ENCODE measurements at regions of chr2 and their contacts with region 1.

Region 1: GRCh38 chr2:153519257-153519875 is 40.8 kb upstream of the RPRM start:
- DNase-seq: peak; percentile 55
- ATAC-seq: peak; percentile 63
- H3K4me3 ChIP-seq: no peak overlapping the region
- H3K27ac ChIP-seq: no peak overlapping the region
- H3K4me1 ChIP-seq: no peaks in the 10 kb centered on the region
- H3K27me3 ChIP-seq: no peaks in the 10 kb centered on the region
- CTCF ChIP-seq: peak; percentile 58 to 82 (median 67)
- POLR2A ChIP-seq: no peak
- RAD21 ChIP-seq: peak; percentile 79

Region 2: GRCh38 chr2:152861349-152861942 is 657.9 kb before region 1 on chr2:
- CTCF ChIA-PET with region 1: interaction called, 3 read pairs
- POLR2A ChIA-PET with region 1: no interaction called
- RAD21 ChIA-PET with region 1: no interaction called
- intact Hi-C with region 1: loop called (anchors 1 kb)
- DNase-seq: peak; percentile 46
- ATAC-seq: peak; percentile 93
- H3K4me3 ChIP-seq: no peak overlapping the region
- H3K27ac ChIP-seq: no peak overlapping the region
- H3K4me1 ChIP-seq: no peaks in the 10 kb centered on the region
- H3K27me3 ChIP-seq: no peaks in the 10 kb centered on the region
- CTCF ChIP-seq: peak; percentile 35 to 86 (median 82); a peak in 5 of 6 replicates
- POLR2A ChIP-seq: no peak
- RAD21 ChIP-seq: peak; percentile 48

Region 3: GRCh38 chr2:152925547-152926327 is 593.6 kb before region 1 on chr2:
- CTCF ChIA-PET with region 1: no interaction called
- POLR2A ChIA-PET with region 1: no interaction called
- RAD21 ChIA-PET with region 1: no interaction called
- intact Hi-C with region 1: loop called (anchors 1 kb)
- DNase-seq: peak; percentile 79
- ATAC-seq: peak; percentile 98
- H3K4me3 ChIP-seq: no peak overlapping the region
- H3K27ac ChIP-seq: no peak overlapping the region
- H3K4me1 ChIP-seq: peaks cover 0 to 12% of the 10 kb centered on the region in 2 experiments; a peak in 1 of 4 replicates
- H3K27me3 ChIP-seq: no peaks in the 10 kb centered on the region; the same call in 1 of the 2 replicates
- CTCF ChIP-seq: peak; percentile 71 to 95 (median 91)
- POLR2A ChIP-seq: no peak
- RAD21 ChIP-seq: peak; percentile 80

Region 4: DNA sequence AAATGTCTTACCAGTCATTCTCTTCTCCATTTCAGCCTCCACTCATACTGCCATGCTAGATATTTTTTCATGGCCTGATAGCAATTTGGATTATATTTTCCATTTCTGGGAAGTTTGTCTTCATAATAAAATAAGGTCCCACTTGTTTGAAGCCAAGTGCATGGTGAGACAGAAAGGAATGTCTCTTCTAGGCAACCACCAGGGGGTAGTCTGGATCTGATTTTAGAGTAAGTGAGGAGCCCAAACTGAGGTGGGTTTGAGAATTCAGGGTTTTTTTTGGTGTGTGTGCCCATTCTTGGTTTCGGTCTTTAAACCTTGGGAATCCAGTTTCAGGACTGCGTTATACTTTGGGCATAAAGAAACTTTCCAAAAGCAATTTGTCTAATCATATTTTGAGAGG is 356.3 kb before region 1 on chr2:
- CTCF ChIA-PET with region 1: no interaction called
- POLR2A ChIA-PET with region 1: no interaction called
- RAD21 ChIA-PET with region 1: no interaction called
- intact Hi-C with region 1: loop called (anchors 1 kb)
- DNase-seq: peak; percentile 53
- ATAC-seq: peak; percentile 64
- H3K4me3 ChIP-seq: no peak overlapping the region
- H3K27ac ChIP-seq: no peak overlapping the region
- H3K4me1 ChIP-seq: peaks cover 3 to 7% of the 10 kb centered on the region in 2 experiments; a peak in 1 of 4 replicates
- H3K27me3 ChIP-seq: peaks cover 5% of the 10 kb centered on the region; the same call in 1 of the 2 replicates
- CTCF ChIP-seq: peak; percentile 62 to 74 (median 70); a peak in 5 of 6 replicates
- POLR2A ChIP-seq: no peak
- RAD21 ChIP-seq: peak; percentile 81

Region 5: DNA sequence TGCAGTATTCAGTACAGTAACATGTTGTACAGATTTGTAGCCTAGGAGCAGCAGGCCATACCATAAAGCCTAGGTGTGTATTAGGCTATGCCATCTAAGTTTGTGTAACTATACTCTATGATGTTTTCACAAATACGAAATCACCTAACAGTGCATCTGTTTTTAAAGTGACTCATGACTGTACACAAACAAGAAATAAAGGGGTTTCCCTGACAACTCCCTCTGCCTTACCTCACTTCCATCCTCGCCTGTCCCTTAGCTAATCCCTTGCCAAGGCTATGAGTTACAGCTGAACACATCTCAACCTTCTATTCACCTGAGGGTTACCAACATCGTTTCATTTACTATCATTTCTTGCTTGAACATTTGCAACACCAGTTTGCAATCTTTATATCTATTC is 37.8 kb after region 1 on chr2:
- CTCF ChIA-PET with region 1: no interaction called
- POLR2A ChIA-PET with region 1: no interaction called
- RAD21 ChIA-PET with region 1: no interaction called
- intact Hi-C with region 1: no loop called
- DNase-seq: no peak
- ATAC-seq: no peak
- H3K4me3 ChIP-seq: no peak overlapping the region
- H3K27ac ChIP-seq: no peak overlapping the region
- H3K4me1 ChIP-seq: no peaks in the 10 kb centered on the region
- H3K27me3 ChIP-seq: no peaks in the 10 kb centered on the region
- CTCF ChIP-seq: no peak
- POLR2A ChIP-seq: no peak
- RAD21 ChIP-seq: no peak

Measured in HCT116 (cell line).